ENCODE measurements at regions of chr2 and their contacts with region 1.

Region 1: DNA sequence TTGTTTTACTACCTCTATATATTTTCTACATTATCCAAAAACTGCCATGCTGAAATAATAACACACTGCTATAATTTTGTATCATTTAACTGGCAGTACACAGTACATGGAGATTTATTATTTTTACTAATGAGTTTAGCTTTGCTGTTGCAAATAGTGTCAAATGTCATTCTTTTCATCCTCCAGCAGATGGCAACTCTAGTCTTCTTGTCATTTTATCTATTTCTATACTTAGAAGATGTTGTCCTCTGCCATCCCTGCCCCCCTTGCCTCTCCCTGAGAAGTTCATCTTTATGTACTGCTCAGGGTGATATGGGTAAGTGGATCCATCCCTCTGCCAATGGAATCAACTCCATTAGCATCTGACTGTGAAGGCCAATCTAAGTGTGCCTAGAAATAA is 21.7 kb upstream of the LRRTM1 start:
- DNase-seq: no peak
- ATAC-seq: peak; percentile 65

Region 2: GRCh38 chr2:80499095-80499494 is 172.9 kb after region 1 on chr2:
- intact Hi-C with region 1: loop called (anchors 1 kb)
- DNase-seq: no peak
- ATAC-seq: peak; percentile 64